ENCODE measurements at regions of chr20 and their contacts with region 1.

Region 1: GRCh38 chr20:62642040-62642665 is at the start of gene SLCO4A1:
- DNase-seq: peak; percentile 81 to 86 (median 83)
- H3K4me3 ChIP-seq: peak within 1 kb of the TSS; percentile 29 to 62
- H3K4me3 Mint-ChIP-seq: peak within 1 kb of the TSS; percentile 71 to 84 (median 78)
- H3K27ac ChIP-seq: peak within 1 kb of the TSS; percentile 22
- H3K27ac Mint-ChIP-seq: peak within 1 kb of the TSS in 6 of 7 donors; percentile 52 to 91 (median 60)
- H3K4me1 ChIP-seq: peaks cover 25% of the 10 kb centered on the region
- H3K4me1 Mint-ChIP-seq: peaks cover 0 to 14% (median 8%) of the 10 kb centered on the region in 4 donors
- H3K27me3 ChIP-seq: no peaks in the 10 kb centered on the region
- H3K27me3 Mint-ChIP-seq: peaks cover 0 to 4% of the 10 kb centered on the region in 2 donors
- total RNA-seq, gene SLCO4A1: 0.97 to 0.99 TPM

Region 2: GRCh38 chr20:62652051-62652926 is 10.1 kb after region 1 on chr20:
- CTCF ChIA-PET with region 1: interaction called, 6 read pairs
- POLR2A ChIA-PET with region 1: interaction called, 68 read pairs
- intact Hi-C with region 1: loop called (anchors 1 kb)
- DNase-seq: peak; percentile 70 to 84 (median 78)
- H3K4me3 ChIP-seq: peak overlapping the region; percentile 30 to 55
- H3K4me3 Mint-ChIP-seq: peak overlapping the region; percentile 77 to 93 (median 88)
- H3K27ac ChIP-seq: peak overlapping the region; percentile 71
- H3K27ac Mint-ChIP-seq: peak overlapping the region; percentile 94 to 98 (median 98)
- H3K4me1 ChIP-seq: peaks cover 38% of the 10 kb centered on the region
- H3K4me1 Mint-ChIP-seq: peaks cover 15 to 32% (median 25%) of the 10 kb centered on the region in 4 donors
- H3K27me3 ChIP-seq: no peaks in the 10 kb centered on the region
- H3K27me3 Mint-ChIP-seq: no peaks in the 10 kb centered on the region